ENCODE measurements at regions of chrX and their contacts with region 1.

Region 1: DNA sequence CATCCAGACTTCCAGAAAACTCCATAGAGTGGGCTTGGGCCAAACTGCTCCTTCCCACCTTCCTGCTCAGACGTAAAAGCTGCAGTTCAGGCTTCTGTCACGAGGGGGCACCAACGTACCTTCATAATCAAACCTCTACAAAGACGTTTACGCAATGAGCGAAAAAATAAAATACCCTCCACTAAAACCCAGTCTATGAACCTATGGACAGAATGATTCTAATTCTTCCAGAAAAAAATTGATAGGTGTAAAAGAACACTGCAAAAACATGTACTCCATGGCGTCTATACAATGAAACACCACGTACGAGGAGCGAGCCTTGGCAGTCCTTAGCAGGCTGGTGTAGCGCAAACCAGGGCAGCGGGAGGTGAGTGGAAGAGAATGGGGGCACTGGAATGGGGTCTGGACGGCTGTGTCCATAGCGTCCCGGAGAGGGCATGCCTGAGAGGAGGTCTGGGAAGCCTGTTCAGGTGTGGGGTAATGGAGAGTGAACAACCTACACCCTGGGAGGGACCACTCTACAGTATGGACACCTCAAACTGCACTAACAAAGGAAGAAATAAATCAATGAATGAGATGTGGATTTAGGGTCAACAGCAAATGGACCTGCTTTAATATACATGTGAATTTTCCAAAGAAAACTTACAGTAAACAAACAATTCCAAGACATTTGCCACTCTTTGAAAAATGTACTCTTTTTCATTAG is 14.4 kb upstream of the RAB40A start:
- DNase-seq: peak; percentile 35 to 84
- ATAC-seq: peak; percentile 61

Region 2: DNA sequence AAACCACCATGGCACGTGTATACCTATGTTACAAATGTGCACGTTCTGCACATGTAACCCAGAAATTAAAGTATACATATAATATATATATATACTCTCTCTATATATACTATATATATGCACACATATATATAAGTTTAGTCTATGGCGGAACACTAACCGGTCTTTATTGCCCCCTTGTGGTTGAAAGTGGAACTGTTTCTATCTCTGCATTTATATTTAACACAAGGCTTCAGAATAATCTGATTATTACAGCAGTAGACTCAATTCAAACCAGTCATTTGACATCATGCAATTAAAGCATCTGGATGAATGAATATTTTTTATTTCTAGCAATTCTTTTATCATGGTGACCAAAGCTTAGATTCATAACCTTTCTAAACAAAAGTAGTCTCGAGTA is 283.8 kb after region 1 on chrX:
- intact Hi-C with region 1: loop called in 1 of 2 experiments (anchors 5 kb)
- DNase-seq: no peak
- ATAC-seq: peak; percentile 60